ENCODE measurements at regions of chr1 and their contacts with region 1.

Region 1: DNA sequence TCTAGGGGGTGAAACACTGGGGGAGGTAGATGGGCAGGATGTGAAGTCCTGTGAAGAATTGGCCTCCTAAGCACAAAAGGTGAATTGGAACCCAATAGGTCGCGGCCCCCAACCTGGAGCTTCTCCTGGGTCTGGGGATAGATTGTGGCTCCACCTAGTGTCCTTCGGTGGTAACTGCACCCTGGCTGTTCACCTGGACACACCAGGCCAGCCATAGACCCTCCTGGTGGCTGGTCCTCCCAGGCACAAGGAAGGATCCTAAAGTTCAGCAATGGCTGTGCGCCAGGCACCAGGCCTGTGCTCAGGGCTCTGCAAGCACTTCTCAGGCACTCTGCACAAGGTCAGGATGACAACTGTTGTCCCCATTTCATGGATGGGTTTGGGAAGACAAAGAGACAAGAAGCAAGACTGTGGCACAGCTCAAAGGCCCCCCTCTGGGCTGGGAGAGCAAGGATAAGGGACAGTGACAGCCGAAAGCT is 13.5 kb downstream of the ESPN start:
- DNase-seq: peak; percentile 79 to 90 (median 86)
- ATAC-seq: peak; percentile 79
- H3K4me3 ChIP-seq: no peak overlapping the region
- H3K27ac ChIP-seq: no peak overlapping the region
- H3K4me1 ChIP-seq: peaks cover 0 to 20% of the 10 kb centered on the region in 2 experiments; a peak in 2 of 5 replicates
- H3K27me3 ChIP-seq: peaks cover 6 to 51% of the 10 kb centered on the region in 2 experiments; a peak in 4 of 5 replicates
- CTCF ChIP-seq: peak; percentile 96 to 98 (median 96)
- EP300 ChIP-seq: no peak
- POLR2A ChIP-seq: no peak
- RAD21 ChIP-seq: peak; percentile 50 to 90

Region 2: GRCh38 chr1:6359216-6360116 is 78.6 kb before region 1 on chr1:
- CTCF ChIA-PET with region 1: interaction called, 3 read pairs
- POLR2A ChIA-PET with region 1: no interaction called
- in situ Hi-C with region 1: no loop called
- intact Hi-C with region 1: loop called (anchors 2 kb)
- DNase-seq: peak; percentile 50 to 69 (median 58)
- ATAC-seq: peak; percentile 79
- H3K4me3 ChIP-seq: 0 out of 2 replicates have a peak overlapping the region, but pooled peaks have one; percentile 6
- H3K27ac ChIP-seq: peak overlapping the region; percentile 69; the same call in 1 of the 3 replicates
- H3K4me1 ChIP-seq: peaks cover 31 to 45% of the 10 kb centered on the region in 2 experiments
- H3K27me3 ChIP-seq: no peaks in the 10 kb centered on the region
- CTCF ChIP-seq: no peak
- EP300 ChIP-seq: peak; percentile 90
- POLR2A ChIP-seq: no peak
- RAD21 ChIP-seq: no peak

Region 3: DNA sequence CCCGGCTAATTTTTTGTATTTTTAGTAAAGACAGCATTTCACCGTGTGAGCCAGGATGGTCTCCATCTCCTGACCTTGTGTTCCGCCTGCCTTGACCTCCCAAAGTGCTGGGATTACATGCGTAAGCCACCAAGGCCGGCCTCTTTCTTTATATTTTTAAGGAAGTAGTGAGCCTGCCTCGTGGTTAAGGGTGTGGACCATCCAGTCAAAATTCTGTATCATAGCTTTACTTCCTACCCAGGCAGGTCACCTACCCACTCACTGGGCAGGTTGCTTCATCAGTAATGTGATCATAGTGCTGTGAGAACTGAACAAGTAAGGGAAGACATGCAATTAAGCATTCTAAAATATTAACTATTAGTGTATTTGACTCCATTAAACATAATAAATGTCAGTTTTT is 36.4 kb before region 1 on chr1:
- CTCF ChIA-PET with region 1: no interaction called
- POLR2A ChIA-PET with region 1: no interaction called
- in situ Hi-C with region 1: no loop called
- intact Hi-C with region 1: loop called (anchors 5 kb)
- DNase-seq: no peak
- ATAC-seq: no peak
- H3K4me3 ChIP-seq: no peak overlapping the region
- H3K27ac ChIP-seq: no peak overlapping the region
- H3K4me1 ChIP-seq: peaks cover 0 to 12% of the 10 kb centered on the region in 2 experiments; a peak in 3 of 5 replicates
- H3K27me3 ChIP-seq: peaks cover 6% of the 10 kb centered on the region in 2 experiments
- CTCF ChIP-seq: no peak
- EP300 ChIP-seq: no peak
- POLR2A ChIP-seq: no peak
- RAD21 ChIP-seq: no peak

Region 4: DNA sequence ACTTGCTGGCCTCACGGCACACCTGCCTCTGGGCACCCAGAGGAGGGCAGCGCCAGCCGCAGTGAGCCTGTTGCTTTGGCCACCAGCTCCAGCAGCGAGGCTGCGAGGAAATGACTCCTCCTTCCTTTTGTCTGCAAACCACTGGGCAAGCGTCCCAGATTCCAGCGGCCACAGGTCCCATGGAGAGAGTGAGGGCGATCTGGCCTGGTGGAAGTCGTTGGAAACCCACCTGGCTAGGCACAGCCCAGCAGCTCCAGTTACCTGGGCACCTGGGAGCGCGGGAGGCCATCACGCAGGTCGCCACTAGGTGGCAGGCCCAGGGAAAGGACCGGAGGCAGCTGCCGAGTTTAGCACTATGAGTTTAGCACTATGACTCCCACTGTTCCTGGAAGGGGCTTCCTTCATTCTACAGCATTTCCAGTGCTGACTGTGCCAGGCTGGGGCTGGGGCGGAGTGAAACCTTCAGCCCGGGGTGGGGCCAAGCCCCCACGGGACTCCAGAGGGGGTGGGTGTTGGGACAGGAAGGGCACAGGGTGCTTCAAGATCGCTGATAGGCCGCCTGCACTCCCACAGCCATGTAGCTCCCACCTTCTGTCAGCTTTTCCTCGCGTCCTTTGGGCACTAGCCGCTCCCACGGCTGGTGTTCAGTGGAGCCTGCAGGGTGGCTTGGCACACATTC is 14.6 kb before region 1 on chr1:
- CTCF ChIA-PET with region 1: interaction called, 9 read pairs
- POLR2A ChIA-PET with region 1: interaction called, 11 read pairs
- in situ Hi-C with region 1: no loop called
- intact Hi-C with region 1: loop called (anchors 1 kb)
- DNase-seq: peak; percentile 74 to 86 (median 81)
- ATAC-seq: peak; percentile 80
- H3K4me3 ChIP-seq: no peak overlapping the region
- H3K27ac ChIP-seq: no peak overlapping the region
- H3K4me1 ChIP-seq: peaks cover 38 to 79% of the 10 kb centered on the region in 2 experiments
- H3K27me3 ChIP-seq: peaks cover 29 to 63% of the 10 kb centered on the region in 2 experiments; a peak in 4 of 5 replicates
- CTCF ChIP-seq: peak; percentile 94 to 99 (median 96)
- EP300 ChIP-seq: no peak
- POLR2A ChIP-seq: no peak
- RAD21 ChIP-seq: peak in 1 of 2 experiments; percentile 77; a peak in 2 of 4 replicates